Ovary (tissue), 10 donors: ENCODE measurements at regions of chr16 and their contacts with region 1.

Region 1: GRCh38 chr16:88064011-88064885 is 113.0 kb downstream of the BANP start:
- DNase-seq: peak in 1 of 5 donors; percentile 22
- H3K4me3 ChIP-seq: no peak overlapping the region
- H3K27ac ChIP-seq: peak overlapping the region in 1 of 2 donors; percentile 73
- H3K4me1 ChIP-seq: peaks cover 11% of the 10 kb centered on the region
- H3K27me3 ChIP-seq: no peaks in the 10 kb centered on the region
- CTCF ChIP-seq: no peak
- EP300 ChIP-seq: no peak
- POLR2A ChIP-seq: no peak

Region 2: DNA sequence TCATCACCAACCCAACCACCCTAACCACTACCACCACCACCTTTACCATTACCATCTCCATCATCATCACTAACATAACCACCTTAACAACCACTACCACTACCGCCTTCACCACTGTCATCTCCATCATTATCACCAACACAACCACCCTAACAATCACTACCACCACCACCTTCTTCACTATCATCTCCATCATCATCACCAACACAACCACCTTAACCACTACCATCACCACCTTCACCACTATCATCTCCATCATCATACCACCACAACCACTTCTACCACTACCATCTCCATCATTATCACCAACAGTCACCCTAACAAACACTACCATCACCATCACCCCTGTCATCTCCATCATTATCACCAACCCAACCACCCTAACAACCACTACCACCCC is 11.5 kb before region 1 on chr16:
- intact Hi-C with region 1: loop called in 1 of 4 experiments (anchors 1 kb)
- DNase-seq: no peak
- H3K4me3 ChIP-seq: no peak overlapping the region
- H3K27ac ChIP-seq: no peak overlapping the region
- H3K4me1 ChIP-seq: no peaks in the 10 kb centered on the region
- H3K27me3 ChIP-seq: no peaks in the 10 kb centered on the region
- CTCF ChIP-seq: no peak
- EP300 ChIP-seq: no peak
- POLR2A ChIP-seq: no peak